Activated CD8-positive, alpha-beta T cell treated with anti-CD3 and anti-CD28 coated beads, Interleukin-2, amount 10 ng/mL, durations not matched to agents 7 days and 5 days (primary cell): ENCODE measurements at regions of chr7 and their contacts with region 1.

Region 1: DNA sequence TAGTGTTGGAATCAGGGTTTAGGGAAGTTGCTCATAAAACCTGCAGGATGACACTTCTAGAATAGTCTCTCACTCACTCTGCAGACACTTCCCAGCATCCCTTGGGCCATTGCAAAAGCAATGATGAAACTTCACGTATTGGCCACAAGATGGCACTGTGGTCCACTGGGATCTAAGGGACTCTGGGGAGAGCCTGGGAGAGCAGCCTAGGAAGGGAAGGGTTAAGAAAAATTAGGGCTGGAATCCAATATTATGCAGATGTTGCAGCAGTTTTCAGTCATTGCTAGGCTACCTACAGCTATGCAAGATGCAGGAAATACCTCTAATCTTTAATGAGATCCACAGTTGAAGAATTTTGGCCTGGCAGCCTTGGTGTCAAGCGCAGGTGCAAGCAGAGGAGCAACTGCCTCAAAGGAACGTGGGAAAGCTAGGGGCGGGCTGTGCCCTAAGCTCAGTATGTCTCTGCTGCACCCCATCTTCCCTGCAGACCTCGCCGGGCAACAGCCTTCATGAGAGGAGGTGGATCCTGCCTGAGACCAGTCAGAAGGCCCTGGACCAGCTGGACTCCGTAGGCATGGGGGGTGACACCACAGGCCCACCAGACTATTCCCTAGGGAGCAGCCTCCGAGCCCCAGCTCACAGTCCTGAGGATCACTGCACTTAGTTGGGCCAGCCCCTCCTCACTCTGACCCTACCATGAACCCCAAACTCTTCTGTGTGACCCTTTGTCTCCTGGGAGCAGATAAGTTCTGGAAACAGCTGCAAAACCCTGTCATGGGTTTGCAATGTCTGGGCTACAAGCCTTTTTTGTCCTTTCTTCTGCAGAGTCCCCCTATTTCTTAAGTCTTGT is 127.9 kb upstream of the PRSS58 start:
- DNase-seq: peak; percentile 67
- ATAC-seq: peak; percentile 58
- H3K4me3 Mint-ChIP-seq: peak overlapping the region; percentile 22
- H3K27ac Mint-ChIP-seq: peak overlapping the region; percentile 26
- H3K4me1 Mint-ChIP-seq: peaks cover 36% of the 10 kb centered on the region
- H3K27me3 Mint-ChIP-seq: no peaks in the 10 kb centered on the region

Region 2: GRCh38 chr7:142345811-142346210 is 39.9 kb before region 1 on chr7:
- CTCF ChIA-PET with region 1: interaction called, 14 read pairs
- POLR2A ChIA-PET with region 1: no interaction called
- DNase-seq: peak; percentile 73
- ATAC-seq: peak; percentile 93
- H3K4me3 Mint-ChIP-seq: peak overlapping the region; percentile 47
- H3K27ac Mint-ChIP-seq: peak overlapping the region; percentile 79
- H3K4me1 Mint-ChIP-seq: peaks cover 27% of the 10 kb centered on the region
- H3K27me3 Mint-ChIP-seq: peaks cover 5% of the 10 kb centered on the region

Region 3: GRCh38 chr7:142412551-142413193 is 27.0 kb after region 1 on chr7:
- CTCF ChIA-PET with region 1: interaction called, 20 read pairs
- POLR2A ChIA-PET with region 1: no interaction called
- DNase-seq: peak; percentile 62
- ATAC-seq: peak; percentile 81
- H3K4me3 Mint-ChIP-seq: no peak overlapping the region
- H3K27ac Mint-ChIP-seq: no peak overlapping the region
- H3K4me1 Mint-ChIP-seq: peaks cover 8% of the 10 kb centered on the region
- H3K27me3 Mint-ChIP-seq: peaks cover 5% of the 10 kb centered on the region

Region 4: DNA sequence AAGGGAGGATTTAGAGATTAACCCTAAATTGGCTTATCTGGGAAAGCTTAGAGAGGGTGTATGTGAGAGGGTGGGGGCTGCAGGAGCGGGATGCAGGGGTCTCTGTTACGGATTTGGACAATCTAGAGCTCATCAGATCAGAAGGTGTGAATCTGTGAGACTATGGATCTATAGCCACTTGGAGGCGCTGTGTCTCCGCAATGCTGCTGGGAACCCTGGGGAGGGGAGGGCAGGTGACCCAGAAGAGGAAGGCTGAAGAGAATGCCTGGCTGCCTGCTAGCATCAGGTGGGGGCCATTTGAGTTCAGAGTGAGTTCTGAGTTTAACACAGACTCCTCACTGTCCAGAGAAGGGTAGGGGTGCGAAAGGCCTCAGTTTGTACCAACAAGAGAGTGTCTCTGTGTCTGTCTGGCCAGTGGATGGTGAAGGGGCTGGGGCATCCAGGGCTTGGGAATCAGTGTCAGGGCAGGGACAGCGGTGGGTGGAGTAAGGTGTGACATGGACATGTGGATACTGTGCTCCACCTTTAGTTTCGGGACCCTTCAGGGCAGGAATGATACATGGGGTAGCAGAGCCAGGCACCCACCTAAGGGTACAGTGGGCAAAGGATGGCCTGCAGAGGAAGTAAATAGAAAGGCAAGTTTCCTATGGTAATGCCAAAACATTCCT is 59.4 kb after region 1 on chr7:
- CTCF ChIA-PET with region 1: interaction called, 12 read pairs
- POLR2A ChIA-PET with region 1: no interaction called
- DNase-seq: peak; percentile 56
- ATAC-seq: no peak
- H3K4me3 Mint-ChIP-seq: no peak overlapping the region
- H3K27ac Mint-ChIP-seq: no peak overlapping the region
- H3K4me1 Mint-ChIP-seq: peaks cover 32% of the 10 kb centered on the region
- H3K27me3 Mint-ChIP-seq: peaks cover 9% of the 10 kb centered on the region

Region 5: DNA sequence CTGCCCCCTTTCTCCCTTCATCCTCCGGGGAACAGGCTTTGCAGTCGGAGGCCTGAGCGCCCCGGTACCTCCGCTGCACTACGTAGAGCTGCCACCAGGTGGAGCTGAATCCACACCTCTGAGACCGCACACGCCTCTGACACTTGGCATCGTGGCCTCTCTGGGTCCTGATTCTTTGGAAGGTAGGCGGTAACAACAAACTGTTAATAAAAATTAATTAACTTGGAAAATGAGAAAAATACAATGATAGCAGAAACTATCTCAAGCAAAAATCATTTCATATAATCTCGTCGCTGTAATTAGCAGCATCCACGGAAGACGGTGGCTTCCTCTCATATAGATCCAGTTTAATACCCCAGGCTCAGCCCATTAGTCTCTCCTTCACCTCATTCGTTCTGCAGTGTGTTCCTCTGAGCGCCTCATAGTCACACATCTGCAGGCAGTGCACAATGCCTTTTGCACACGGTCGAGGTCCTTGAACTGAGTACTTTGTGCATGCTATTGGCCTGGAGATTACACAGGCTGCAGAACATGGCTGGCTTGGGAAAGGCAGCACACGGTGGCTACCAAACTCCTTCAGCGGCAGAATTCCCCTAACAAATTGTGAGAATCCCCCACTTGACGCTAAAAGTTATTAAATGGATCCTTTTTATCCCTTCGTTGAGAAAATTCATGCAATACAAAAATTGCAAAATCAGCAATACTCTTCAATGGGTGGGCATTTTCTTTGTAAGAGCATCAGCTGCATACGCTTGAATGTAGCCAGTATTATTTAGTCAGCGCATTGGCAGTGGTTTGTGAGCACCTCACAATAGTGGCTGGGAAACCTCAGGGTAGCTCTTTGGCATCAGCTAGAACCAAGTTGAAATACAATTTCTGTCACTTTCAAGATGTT is 622.5 kb after region 1 on chr7:
- CTCF ChIA-PET with region 1: interaction called, 11 read pairs
- POLR2A ChIA-PET with region 1: no interaction called
- DNase-seq: peak; percentile 86
- ATAC-seq: peak; percentile 93
- H3K4me3 Mint-ChIP-seq: no peak overlapping the region
- H3K27ac Mint-ChIP-seq: no peak overlapping the region
- H3K4me1 Mint-ChIP-seq: peaks cover 2% of the 10 kb centered on the region
- H3K27me3 Mint-ChIP-seq: peaks cover 22% of the 10 kb centered on the region